Dorsolateral prefrontal cortex (tissue), 120 donors: ENCODE measurements at regions of chr11 and their contacts with region 1.

Region 1: DNA sequence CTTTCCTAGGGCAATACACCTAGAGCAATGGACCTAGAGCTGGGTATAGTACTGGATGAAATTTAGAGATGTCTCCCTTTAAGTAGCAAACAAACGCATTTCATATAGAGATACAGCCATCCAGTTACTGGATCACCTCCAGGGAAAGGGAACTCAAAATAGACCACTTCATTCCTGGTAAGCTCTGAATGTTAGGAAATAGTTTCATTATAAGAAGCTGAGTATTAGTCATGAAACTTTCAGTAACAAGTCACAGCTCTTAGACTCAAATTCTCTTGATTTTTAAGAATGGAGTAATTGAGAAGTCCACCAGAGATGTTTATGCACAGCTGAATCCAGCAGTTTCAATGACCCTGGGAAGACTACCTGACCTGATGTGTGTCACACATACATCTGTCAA is 221.9 kb downstream of the FAM76B start:
- DNase-seq: no peak
- H3K4me3 ChIP-seq: no peak overlapping the region
- H3K27ac ChIP-seq: peak overlapping the region in 2 of 59 donors; percentile 1 to 33
- H3K27me3 ChIP-seq: no peaks in the 10 kb centered on the region
- CTCF ChIP-seq: no peak

Region 2: GRCh38 chr11:95453616-95454171 is 114.0 kb before region 1 on chr11:
- intact Hi-C with region 1: loop called in 1 of 2 experiments (anchors 5 kb)
- DNase-seq: peak in 9 of 10 donors; percentile 54 to 84 (median 71)
- H3K4me3 ChIP-seq: peak overlapping the region in 11 of 59 donors; percentile 0 to 47 (median 12)
- H3K27ac ChIP-seq: peak overlapping the region in 35 of 59 donors; percentile 1 to 77 (median 44)
- H3K27me3 ChIP-seq: no peaks in the 10 kb centered on the region
- CTCF ChIP-seq: peak in 4 of 56 donors; percentile 7 to 27 (median 18)